ENCODE measurements at regions of chr17 and their contacts with region 1.

Region 1: GRCh38 chr17:74123350-74123749 is 80.1 kb upstream of the RPL38 start:
- DNase-seq: no peak
- ATAC-seq: no peak
- H3K4me3 ChIP-seq: no peak overlapping the region
- H3K27ac ChIP-seq: no peak overlapping the region
- H3K4me1 ChIP-seq: no peaks in the 10 kb centered on the region
- H3K27me3 ChIP-seq: peaks cover 7% of the 10 kb centered on the region
- CTCF ChIP-seq: no peak

Region 2: DNA sequence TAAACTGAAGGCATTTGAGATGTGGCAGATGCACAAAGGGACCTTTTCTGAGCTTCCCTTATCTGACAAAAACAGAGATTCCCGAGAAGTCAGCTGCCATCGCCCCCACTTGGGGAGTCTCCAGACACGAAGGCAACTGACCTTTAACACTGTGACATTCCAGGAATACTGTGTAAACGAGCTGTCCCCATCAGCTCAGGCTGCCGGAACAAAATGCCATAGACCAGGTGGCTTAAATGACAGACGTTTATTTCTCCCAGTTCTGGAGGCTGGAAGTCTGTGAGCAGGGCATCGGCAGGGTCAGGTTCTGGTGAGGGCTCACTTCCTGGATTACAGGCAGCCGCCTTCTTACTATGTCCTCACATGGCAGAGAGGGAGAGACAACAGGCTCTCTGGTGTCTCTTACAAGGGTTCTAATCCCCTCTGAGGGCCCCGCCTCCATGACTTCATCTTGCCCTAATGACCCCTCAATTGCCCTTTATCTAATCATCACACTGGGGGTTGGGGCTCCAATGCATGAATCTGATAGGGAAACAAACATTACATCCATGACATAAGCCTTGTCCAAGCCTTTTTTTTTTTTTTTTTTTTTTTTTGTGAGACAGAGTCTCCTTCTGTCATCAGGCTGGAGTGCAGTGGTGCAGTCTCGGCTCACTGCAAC is 98.3 kb before region 1 on chr17:
- intact Hi-C with region 1: no loop called
- DNase-seq: no peak
- ATAC-seq: no peak
- H3K4me3 ChIP-seq: no peak overlapping the region
- H3K27ac ChIP-seq: no peak overlapping the region
- H3K4me1 ChIP-seq: no peaks in the 10 kb centered on the region
- H3K27me3 ChIP-seq: peaks cover 3% of the 10 kb centered on the region
- CTCF ChIP-seq: no peak

Region 3: GRCh38 chr17:74259667-74260524 is 136.5 kb after region 1 on chr17:
- intact Hi-C with region 1: loop called (anchors 10 kb)
- DNase-seq: no peak
- ATAC-seq: no peak
- H3K4me3 ChIP-seq: no peak overlapping the region
- H3K27ac ChIP-seq: no peak overlapping the region
- H3K4me1 ChIP-seq: no peaks in the 10 kb centered on the region
- H3K27me3 ChIP-seq: no peaks in the 10 kb centered on the region
- CTCF ChIP-seq: no peak

Measured in lower lobe of right lung (tissue), 2 donors.